ENCODE measurements at regions of chr5 and their contacts with region 1.

Region 1: GRCh38 chr5:8394962-8395361 is 526.0 kb downstream of the MTRR start:
- DNase-seq: no peak
- H3K4me3 ChIP-seq: no peak overlapping the region
- CTCF ChIP-seq: no peak

Region 2: GRCh38 chr5:8299716-8300115 is 95.2 kb before region 1 on chr5:
- in situ Hi-C with region 1: loop called (anchors 5 kb)
- DNase-seq: no peak
- H3K4me3 ChIP-seq: no peak overlapping the region
- CTCF ChIP-seq: no peak

Region 3: DNA sequence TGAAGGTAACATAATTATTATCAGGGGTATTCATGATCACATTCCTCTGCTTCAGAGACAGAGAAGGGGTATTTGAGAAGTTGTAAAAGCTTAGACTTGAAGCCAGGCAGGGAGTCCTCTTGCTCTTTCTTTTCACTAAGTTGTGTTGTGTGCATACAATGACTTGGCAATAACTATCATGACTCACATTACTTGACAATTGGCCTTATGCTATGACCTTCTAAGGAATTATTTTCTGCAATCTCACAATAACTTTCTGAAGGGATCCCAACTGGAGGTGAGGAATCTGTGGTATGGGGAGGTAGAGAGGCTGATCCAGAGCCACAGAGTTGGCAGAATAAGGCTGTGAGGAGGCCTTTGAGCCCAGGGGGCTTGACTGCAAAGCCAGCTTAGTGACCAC is 96.3 kb after region 1 on chr5:
- in situ Hi-C with region 1: no loop called
- DNase-seq: no peak
- H3K4me3 ChIP-seq: no peak overlapping the region
- CTCF ChIP-seq: no peak

Measured in astrocyte of the cerebellum (primary cell).